ENCODE measurements at regions of chr1 and their contacts with region 1.

Region 1: DNA sequence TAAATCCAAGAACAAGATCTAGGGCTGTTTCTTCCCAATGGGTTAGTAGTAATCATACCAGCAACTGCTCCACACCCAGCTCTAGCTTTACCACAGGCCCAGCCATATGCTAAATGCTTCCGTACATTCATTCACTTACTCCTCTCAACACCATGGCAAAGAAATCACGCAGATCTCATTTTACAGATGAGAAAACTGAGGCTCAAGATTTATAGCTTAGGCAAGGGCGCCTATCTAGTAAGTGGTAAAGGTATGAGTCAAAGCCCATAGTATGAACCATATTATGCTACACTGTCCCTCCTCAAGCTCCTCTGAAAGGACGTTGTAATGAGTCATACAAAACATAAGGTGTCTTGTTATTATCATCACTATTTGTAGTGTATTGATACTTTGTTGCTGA is 82.2 kb downstream of the NIBAN1 start:
- DNase-seq: peak; percentile 48
- ATAC-seq: peak; percentile 74
- H3K4me3 Mint-ChIP-seq: no peak overlapping the region
- H3K27ac Mint-ChIP-seq: peak overlapping the region; percentile 67
- H3K4me1 Mint-ChIP-seq: peaks cover 52% of the 10 kb centered on the region
- H3K27me3 Mint-ChIP-seq: no peaks in the 10 kb centered on the region

Region 2: DNA sequence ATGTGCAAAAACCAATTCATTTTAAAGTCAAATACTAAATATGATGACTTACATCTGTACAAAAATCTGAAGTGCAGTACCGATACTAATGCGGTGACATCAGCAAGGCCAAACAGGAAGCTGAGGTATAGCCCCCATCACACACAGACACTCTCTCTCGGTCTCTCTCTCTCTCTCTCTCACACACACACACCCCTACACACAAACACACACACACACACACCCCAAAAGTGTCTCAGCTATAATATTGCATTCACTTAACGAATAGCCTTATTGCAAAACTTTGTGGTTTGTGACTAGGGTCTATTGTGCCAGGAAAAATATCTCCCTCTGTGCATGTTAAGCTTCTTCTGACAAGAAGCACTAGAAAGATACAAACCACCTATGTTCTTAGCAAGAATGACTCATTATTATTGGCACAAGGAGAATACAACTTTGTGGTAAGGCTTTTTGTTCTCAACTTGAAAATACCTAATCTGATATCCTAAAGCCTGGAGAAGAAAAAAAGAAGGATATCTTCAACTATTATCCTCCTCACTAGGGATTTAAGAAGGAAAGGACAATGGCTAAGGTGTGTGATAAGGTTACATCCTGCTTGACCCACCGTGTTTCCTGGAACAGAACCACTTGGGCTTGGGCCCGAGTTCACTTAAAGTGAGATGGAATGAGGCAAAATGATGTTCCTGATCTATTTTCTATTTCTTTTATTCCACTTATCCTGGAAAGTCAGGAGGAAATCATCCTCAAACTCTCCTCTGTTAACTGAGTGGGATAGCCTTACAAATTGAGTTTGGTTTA is 24.9 kb before region 1 on chr1:
- CTCF ChIA-PET with region 1: interaction called, 16 read pairs
- POLR2A ChIA-PET with region 1: interaction called, 19 read pairs
- intact Hi-C with region 1: loop called (anchors 1 kb)
- DNase-seq: peak; percentile 75
- ATAC-seq: peak; percentile 85
- H3K4me3 Mint-ChIP-seq: peak overlapping the region; percentile 32
- H3K27ac Mint-ChIP-seq: peak overlapping the region; percentile 90
- H3K4me1 Mint-ChIP-seq: peaks cover 46% of the 10 kb centered on the region
- H3K27me3 Mint-ChIP-seq: no peaks in the 10 kb centered on the region

Measured in activated CD4-positive, alpha-beta T cell treated with anti-CD3 and anti-CD28 coated beads for 36 hours (primary cell).